ENCODE measurements at regions of chr6 and their contacts with region 1.

Region 1: DNA sequence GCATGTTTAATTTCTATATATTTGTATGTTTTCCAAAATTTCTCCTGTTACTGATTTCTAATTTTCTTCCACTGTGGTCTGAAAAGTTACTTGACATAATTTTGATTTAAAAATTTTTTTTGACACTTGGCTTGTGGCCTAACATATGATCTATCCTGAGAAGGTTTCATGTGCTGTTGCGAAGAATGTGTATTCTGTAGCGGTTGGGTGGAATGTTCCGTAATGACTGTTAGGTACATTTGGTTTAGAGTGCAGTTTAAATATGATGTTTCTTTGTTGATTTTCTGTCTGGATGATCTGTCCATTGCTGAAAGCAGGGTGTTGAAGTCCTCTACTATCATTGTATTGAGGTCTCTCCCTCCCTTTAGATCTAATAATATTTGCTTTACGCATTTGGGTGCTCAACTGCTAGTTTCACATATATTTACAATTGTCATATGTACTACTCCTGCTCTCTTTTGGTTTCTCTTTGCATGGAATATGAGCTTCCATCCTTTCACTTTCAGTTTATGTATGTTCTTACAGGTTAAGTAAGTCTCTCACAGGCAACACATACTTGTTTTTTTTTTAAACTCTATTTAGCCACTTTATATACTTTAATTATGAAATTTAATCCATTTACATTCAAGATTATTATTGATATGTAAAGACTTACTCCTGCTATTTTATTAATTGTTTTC is 19.5 kb upstream of the EDN1 start:
- DNase-seq: no peak
- ATAC-seq: peak; percentile 36
- H3K4me3 Mint-ChIP-seq: no peak overlapping the region
- H3K27ac Mint-ChIP-seq: no peak overlapping the region
- H3K4me1 Mint-ChIP-seq: peaks cover 5% of the 10 kb centered on the region
- H3K27me3 Mint-ChIP-seq: no peaks in the 10 kb centered on the region

Region 2: DNA sequence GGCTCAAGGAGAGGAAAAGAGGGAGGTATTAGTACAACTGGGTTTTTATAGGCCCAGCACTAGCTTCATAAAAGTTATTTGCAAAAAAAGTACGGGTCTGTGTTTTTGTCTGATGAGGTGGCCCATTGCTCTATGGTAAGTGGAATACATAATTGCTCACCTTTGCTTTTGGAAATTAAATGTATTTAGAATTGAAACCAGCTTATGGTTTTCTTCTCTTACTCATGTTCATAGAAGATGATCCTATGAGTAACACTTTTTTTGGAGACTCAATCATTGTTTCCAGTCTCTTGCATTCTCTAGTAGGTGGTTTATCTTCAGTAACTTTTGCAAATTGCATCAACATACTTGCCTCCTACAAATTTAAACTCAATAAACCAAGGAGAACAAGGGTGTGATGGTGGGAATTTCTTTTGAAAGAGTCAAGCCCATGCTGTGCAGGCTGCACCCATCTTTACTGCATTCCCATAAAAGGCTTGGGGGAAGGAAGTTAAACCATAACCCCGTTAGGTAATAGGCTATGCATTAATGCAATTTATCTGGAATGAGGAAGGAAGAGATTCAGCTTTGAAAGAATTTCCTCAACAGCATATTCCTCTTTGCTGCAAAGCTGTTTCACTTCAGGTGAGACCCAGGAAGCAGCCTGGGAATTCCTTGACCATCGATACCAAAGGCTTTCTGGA is 29.1 kb before region 1 on chr6:
- CTCF ChIA-PET with region 1: no interaction called
- POLR2A ChIA-PET with region 1: no interaction called
- intact Hi-C with region 1: loop called in 1 of 2 experiments (anchors 1 kb)
- DNase-seq: no peak
- ATAC-seq: peak; percentile 91
- H3K4me3 Mint-ChIP-seq: no peak overlapping the region
- H3K27ac Mint-ChIP-seq: peak overlapping the region; percentile 61
- H3K4me1 Mint-ChIP-seq: peaks cover 24% of the 10 kb centered on the region
- H3K27me3 Mint-ChIP-seq: peaks cover 4% of the 10 kb centered on the region

Measured in activated CD4-positive, alpha-beta T cell treated with anti-CD3 and anti-CD28 coated beads for 36 hours (primary cell).